ENCODE measurements at regions of chr19 and their contacts with region 1.

Region 1: GRCh38 chr19:19643158-19644053 is at the start of gene GMIP:
- H3K4me3 Mint-ChIP-seq: peak within 1 kb of the TSS; percentile 98
- H3K27ac Mint-ChIP-seq: peak within 1 kb of the TSS; percentile 98
- H3K4me1 Mint-ChIP-seq: peaks cover 27% of the 10 kb centered on the region
- H3K27me3 Mint-ChIP-seq: no peaks in the 10 kb centered on the region

Region 2: GRCh38 chr19:19531951-19532805 is 111.2 kb before region 1 on chr19:
- intact Hi-C with region 1: loop called (anchors 1 kb)
- H3K4me3 Mint-ChIP-seq: peak overlapping the region; percentile 19
- H3K27ac Mint-ChIP-seq: no peak overlapping the region
- H3K4me1 Mint-ChIP-seq: peaks cover 17% of the 10 kb centered on the region
- H3K27me3 Mint-ChIP-seq: peaks cover 13% of the 10 kb centered on the region

Region 3: GRCh38 chr19:19627621-19628500 is 15.5 kb before region 1 on chr19 and contains the start of gene LPAR2:
- intact Hi-C with region 1: no loop called
- H3K4me3 Mint-ChIP-seq: peak within 1 kb of the TSS; percentile 71
- H3K27ac Mint-ChIP-seq: peak within 1 kb of the TSS; percentile 42
- H3K4me1 Mint-ChIP-seq: peaks cover 31% of the 10 kb centered on the region
- H3K27me3 Mint-ChIP-seq: peaks cover 7% of the 10 kb centered on the region

Region 4: DNA sequence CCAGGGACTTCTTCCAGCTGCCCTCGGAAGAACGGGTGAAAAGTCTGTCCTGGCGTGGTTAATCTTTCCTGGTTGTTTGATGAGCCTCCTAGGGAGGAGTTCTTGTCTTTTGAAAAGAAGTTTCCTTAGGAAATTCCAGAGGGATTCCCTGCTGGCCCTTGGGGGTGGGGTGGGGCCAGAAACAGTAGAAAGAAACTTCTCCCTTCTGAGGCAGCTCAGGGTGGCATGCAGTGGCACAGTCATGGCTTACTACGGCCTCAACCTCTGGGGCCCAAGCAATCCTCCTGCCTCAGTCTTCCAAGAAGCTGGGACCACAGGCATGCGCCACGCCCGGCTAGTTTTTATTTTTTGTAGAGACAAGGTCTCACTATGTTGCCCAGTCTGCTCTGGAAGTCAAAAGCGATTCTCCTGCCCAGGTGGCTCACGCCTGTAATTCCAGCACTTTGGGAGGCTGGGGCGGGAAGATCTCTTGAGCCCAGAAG is 26.7 kb after region 1 on chr19:
- intact Hi-C with region 1: no loop called
- H3K4me3 Mint-ChIP-seq: peak overlapping the region; percentile 96
- H3K27ac Mint-ChIP-seq: peak overlapping the region; percentile 97
- H3K4me1 Mint-ChIP-seq: peaks cover 26% of the 10 kb centered on the region
- H3K27me3 Mint-ChIP-seq: no peaks in the 10 kb centered on the region

Region 5: GRCh38 chr19:19711934-19712828 is 68.8 kb after region 1 on chr19:
- intact Hi-C with region 1: no loop called
- H3K4me3 Mint-ChIP-seq: no peak overlapping the region
- H3K27ac Mint-ChIP-seq: no peak overlapping the region
- H3K4me1 Mint-ChIP-seq: no peaks in the 10 kb centered on the region
- H3K27me3 Mint-ChIP-seq: no peaks in the 10 kb centered on the region